ENCODE measurements at regions of chr17 and their contacts with region 1.

Region 1: GRCh38 chr17:7989781-7990655 is 12.4 kb upstream of the GUCY2D start:
- DNase-seq: peak; percentile 77 to 88
- ATAC-seq: peak; percentile 77 to 88 (median 86)
- H3K4me3 ChIP-seq: peak overlapping the region; percentile 43 to 85 (median 66)
- H3K27ac ChIP-seq: peak overlapping the region in 7 of 10 donors; percentile 11 to 68 (median 37)
- H3K4me1 ChIP-seq: peaks cover 0 to 16% (median 7%) of the 10 kb centered on the region in 9 donors
- H3K27me3 ChIP-seq: peaks cover 0 to 12% (median 0%) of the 10 kb centered on the region in 7 donors
- CTCF ChIP-seq: peak; percentile 94 to 98 (median 97)

Region 2: DNA sequence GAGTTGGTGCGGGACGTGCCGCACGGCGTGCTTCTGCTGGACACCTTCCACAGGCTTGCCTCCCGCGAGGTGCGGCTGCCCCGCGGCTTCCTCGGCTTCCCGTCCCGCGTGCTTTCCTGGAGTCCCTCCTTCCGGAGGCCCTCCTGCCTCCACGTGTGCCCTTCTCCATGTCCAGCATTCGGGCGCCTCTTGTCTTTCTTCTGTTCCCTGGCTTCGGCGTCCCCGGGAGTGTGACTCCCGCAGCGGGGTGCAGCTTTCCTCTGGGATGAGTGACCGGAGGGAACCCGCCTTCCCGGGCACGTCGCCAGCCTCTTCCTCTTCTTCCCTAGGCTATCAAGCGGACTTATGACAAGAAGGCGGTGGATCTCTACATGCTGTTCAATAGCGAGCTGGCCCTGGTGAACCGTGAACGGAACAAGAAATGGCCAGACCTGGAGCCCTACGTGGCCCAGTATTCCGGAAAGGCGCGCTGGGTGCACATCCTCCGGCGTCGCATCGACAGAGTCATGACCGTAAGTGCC is 249.5 kb before region 1 on chr17:
- intact Hi-C with region 1: loop called in 6 of 10 experiments (anchors 1 to 10 kb)
- DNase-seq: peak in 1 of 2 donors; percentile 27
- ATAC-seq: peak in 2 of 8 donors; percentile 13 to 43
- H3K4me3 ChIP-seq: peak overlapping the region in 6 of 10 donors; percentile 7 to 41 (median 22)
- H3K27ac ChIP-seq: no peak overlapping the region
- H3K4me1 ChIP-seq: peaks cover 0 to 15% (median 0%) of the 10 kb centered on the region in 9 donors
- H3K27me3 ChIP-seq: peaks cover 0 to 31% (median 14%) of the 10 kb centered on the region in 7 donors
- CTCF ChIP-seq: no peak

Region 3: DNA sequence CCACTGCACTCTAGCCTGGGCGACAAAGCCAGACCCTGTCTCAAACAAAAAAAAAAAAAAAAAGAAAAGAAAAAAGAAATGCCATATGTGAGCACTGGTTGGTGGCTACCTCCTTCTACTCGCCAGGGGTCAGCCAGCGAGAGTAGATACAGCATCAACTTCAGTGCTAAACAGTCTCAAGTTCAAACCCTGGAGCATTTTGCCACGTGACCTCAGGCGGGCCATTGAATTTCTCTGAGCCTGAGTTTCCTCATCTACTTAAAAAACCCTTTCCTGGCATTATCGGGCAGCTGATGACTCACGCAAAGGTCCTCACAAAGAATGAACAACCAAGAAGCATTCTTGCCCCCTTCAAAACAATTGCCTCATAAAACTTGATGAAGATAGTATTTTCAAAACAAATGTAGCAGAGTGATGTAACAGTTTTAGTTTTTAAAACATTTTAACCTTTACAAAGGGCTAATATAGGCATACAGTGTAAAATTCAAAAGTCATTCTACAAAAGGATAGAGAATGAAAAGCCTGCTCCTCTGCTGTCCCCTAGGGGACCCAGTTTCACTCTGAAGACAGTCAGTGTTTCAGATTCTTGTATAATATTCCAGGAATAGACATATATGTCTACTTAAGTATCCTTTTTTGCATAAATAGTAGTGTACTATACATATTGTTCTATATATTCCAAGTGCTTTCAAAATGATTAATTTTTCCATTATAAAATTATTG is 244.1 kb before region 1 on chr17:
- intact Hi-C with region 1: loop called in 6 of 10 experiments (anchors 1 to 10 kb)
- DNase-seq: no peak
- ATAC-seq: peak in 1 of 8 donors; percentile 37
- H3K4me3 ChIP-seq: no peak overlapping the region
- H3K27ac ChIP-seq: no peak overlapping the region
- H3K4me1 ChIP-seq: peaks cover 0 to 18% (median 8%) of the 10 kb centered on the region in 9 donors
- H3K27me3 ChIP-seq: peaks cover 0 to 18% (median 9%) of the 10 kb centered on the region in 7 donors
- CTCF ChIP-seq: peak in 1 of 9 donors; percentile 8

Region 4: GRCh38 chr17:7818746-7819645 is 171.0 kb before region 1 on chr17:
- intact Hi-C with region 1: loop called in 8 of 10 experiments (anchors 2 to 10 kb)
- DNase-seq: no peak
- ATAC-seq: peak in 1 of 8 donors; percentile 26
- H3K4me3 ChIP-seq: no peak overlapping the region
- H3K27ac ChIP-seq: no peak overlapping the region
- H3K4me1 ChIP-seq: no peaks in the 10 kb centered on the region
- H3K27me3 ChIP-seq: peaks cover 0 to 14% (median 0%) of the 10 kb centered on the region in 7 donors
- CTCF ChIP-seq: no peak

Region 5: GRCh38 chr17:7825206-7825990 is 164.6 kb before region 1 on chr17:
- intact Hi-C with region 1: loop called in 8 of 10 experiments (anchors 2 to 10 kb)
- DNase-seq: no peak
- ATAC-seq: peak in 1 of 8 donors; percentile 20
- H3K4me3 ChIP-seq: no peak overlapping the region
- H3K27ac ChIP-seq: no peak overlapping the region
- H3K4me1 ChIP-seq: peaks cover 0 to 7% (median 0%) of the 10 kb centered on the region in 9 donors
- H3K27me3 ChIP-seq: peaks cover 0 to 5% (median 0%) of the 10 kb centered on the region in 7 donors
- CTCF ChIP-seq: peak in 4 of 9 donors; percentile 23 to 29 (median 26)

Region 6: GRCh38 chr17:7862692-7863437 is 127.2 kb before region 1 on chr17:
- intact Hi-C with region 1: loop called in 8 of 10 experiments (anchors 1 to 5 kb)
- DNase-seq: peak in 1 of 2 donors; percentile 62
- ATAC-seq: no peak
- H3K4me3 ChIP-seq: no peak overlapping the region
- H3K27ac ChIP-seq: no peak overlapping the region
- H3K4me1 ChIP-seq: peaks cover 0 to 26% (median 14%) of the 10 kb centered on the region in 9 donors
- H3K27me3 ChIP-seq: no peaks in the 10 kb centered on the region
- CTCF ChIP-seq: peak; percentile 65 to 83 (median 81)

Region 7: GRCh38 chr17:7915611-7916382 is 74.2 kb before region 1 on chr17 and contains the start of gene RNF227:
- intact Hi-C with region 1: loop called (anchors 1 to 5 kb)
- DNase-seq: peak; percentile 91 to 94
- ATAC-seq: peak; percentile 88 to 93 (median 91)
- H3K4me3 ChIP-seq: peak within 1 kb of the TSS; percentile 49 to 93 (median 65)
- H3K27ac ChIP-seq: peak within 1 kb of the TSS; percentile 70 to 98 (median 92)
- H3K4me1 ChIP-seq: peaks cover 3 to 35% (median 26%) of the 10 kb centered on the region in 9 donors
- H3K27me3 ChIP-seq: no peaks in the 10 kb centered on the region
- CTCF ChIP-seq: no peak
- total RNA-seq, gene RNF227: 0.15 to 1.6 (median 0.90) TPM

Region 8: DNA sequence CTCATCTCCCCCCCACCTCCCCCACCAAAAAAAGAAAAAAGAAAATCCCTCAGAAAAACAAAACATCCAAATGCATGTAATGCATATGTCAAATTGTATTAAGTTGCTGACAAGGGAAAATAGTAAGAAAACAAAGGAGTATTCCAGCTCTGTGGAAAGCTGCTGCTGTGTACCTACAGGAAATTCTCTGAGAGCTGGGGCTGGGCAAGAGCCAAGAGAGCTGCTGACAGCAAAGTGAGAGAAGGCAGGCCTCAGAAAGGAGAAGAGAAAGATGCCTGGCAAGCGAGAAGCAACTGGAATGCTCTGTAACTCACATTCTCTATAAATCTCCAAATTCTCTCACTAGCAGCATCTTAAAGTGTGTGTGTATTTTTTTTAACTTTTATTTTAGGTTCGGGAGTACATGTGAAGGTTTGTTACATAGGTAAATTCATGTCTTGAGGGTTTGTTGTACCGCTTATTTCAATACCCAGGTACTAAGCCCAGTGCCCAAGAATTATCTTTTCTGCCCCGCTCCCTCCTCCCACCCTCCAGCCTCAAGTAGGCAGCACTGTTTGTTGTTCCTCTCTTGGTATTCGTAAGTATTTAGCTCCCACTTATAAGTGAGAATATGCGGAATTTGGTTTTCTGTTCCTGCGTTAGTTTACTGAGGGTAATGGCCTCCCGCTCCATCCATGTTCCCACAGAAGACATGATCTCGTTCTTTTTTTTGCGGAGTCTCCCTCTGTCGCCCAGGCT is 33.6 kb before region 1 on chr17:
- intact Hi-C with region 1: no loop called
- DNase-seq: peak; percentile 62 to 69
- ATAC-seq: peak; percentile 75 to 96 (median 91)
- H3K4me3 ChIP-seq: no peak overlapping the region
- H3K27ac ChIP-seq: peak overlapping the region in 2 of 10 donors; percentile 44 to 47
- H3K4me1 ChIP-seq: peaks cover 0 to 21% (median 11%) of the 10 kb centered on the region in 9 donors
- H3K27me3 ChIP-seq: peaks cover 0 to 4% (median 0%) of the 10 kb centered on the region in 7 donors
- CTCF ChIP-seq: no peak

Region 9: DNA sequence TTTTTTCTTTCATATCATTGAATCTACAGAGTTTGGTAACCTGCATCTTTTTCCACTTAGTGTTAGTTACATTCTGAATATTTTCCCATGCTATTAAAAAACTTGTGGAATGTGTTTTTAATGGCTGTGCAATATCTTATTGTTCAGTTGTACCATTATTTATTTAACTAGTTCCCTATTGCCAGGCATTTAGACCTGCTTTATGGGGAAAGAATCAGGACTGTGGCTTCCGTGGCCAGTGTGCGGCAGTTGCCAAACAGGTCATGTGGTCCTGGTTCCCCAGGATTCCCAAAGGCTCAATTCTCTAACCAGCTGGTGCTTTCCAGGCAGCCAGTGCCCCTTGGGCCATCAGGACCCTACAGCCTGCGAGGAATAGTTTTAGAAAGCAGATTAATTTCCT is 476.4 kb after region 1 on chr17:
- intact Hi-C with region 1: no loop called
- DNase-seq: no peak
- ATAC-seq: no peak
- H3K4me3 ChIP-seq: no peak overlapping the region
- H3K27ac ChIP-seq: peak overlapping the region in 1 of 10 donors; percentile 11
- H3K4me1 ChIP-seq: peaks cover 10 to 72% (median 33%) of the 10 kb centered on the region in 9 donors
- H3K27me3 ChIP-seq: no peaks in the 10 kb centered on the region
- CTCF ChIP-seq: no peak

Measured in heart right ventricle (tissue), 16 donors.